CD4-positive, alpha-beta T cell (primary cell): ENCODE measurements at regions of chr17 and their contacts with region 1.

Region 1: DNA sequence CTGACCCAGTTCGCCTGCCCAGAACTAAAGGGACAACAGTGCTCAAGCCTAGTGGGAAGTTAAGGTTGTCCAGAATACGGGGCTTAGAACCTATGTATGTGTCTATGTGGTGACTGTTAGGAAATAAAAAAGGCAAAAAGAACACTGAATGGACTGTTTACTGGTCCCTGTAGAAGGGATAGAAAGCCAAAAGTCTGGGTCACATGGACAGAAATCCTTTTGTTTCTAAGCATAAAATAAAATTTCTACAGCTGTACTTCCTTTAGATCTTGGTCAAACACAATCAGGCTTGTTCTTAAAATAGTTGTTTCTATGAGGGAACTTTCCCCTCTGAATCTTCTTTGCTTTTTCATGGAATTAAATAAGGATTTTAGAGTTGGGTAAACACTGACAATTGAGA is 212.8 kb downstream of the LGALS9B start:
- DNase-seq: no peak
- ATAC-seq: no peak
- H3K4me3 ChIP-seq: no peak overlapping the region
- H3K4me3 Mint-ChIP-seq: no peak overlapping the region
- H3K27ac ChIP-seq: peak overlapping the region in 1 of 2 donors; percentile 22
- H3K27ac Mint-ChIP-seq: peak overlapping the region; percentile 75
- H3K4me1 ChIP-seq: peaks cover 15% of the 10 kb centered on the region
- H3K4me1 Mint-ChIP-seq: peaks cover 58% of the 10 kb centered on the region
- H3K27me3 ChIP-seq: no peaks in the 10 kb centered on the region
- H3K27me3 Mint-ChIP-seq: no peaks in the 10 kb centered on the region
- CTCF ChIP-seq: no peak

Region 2: DNA sequence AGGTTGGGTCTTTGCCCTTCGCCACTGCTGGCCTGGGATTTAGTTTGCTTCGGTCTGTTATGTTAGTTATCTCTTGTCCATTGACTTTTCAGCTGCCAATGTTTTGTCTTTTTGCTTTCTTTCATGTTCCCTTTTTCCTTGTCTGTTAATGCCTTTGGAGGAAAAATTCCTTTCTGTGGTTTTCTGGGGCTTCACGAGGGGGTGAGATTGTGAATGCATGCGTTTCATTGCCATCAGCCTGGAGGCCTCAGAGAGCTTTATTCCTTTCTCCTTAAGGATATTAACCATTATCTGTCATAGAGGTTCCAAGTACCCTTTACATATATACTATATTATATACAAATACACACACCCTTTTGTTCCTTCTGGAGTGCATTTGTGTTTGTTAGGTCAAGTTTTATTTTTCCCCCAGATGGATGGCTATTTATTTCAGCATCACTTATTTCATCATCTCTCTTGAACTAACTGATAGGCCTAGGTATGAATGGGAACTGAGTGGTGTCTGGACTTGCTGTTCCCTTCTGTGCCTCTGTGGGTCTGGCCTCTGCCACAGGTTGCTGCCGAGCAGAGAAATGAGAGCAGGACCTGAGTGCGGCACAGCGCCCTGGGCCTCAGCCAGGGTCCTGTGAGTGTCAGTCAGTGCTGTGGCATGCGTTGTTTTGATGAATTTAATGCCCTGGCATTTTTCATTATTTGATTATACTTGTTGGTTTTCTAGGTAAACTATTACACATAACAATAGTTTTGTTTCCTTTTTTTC is 19.4 kb after region 1 on chr17:
- CTCF ChIA-PET with region 1: no interaction called
- POLR2A ChIA-PET with region 1: interaction called, 4 read pairs
- intact Hi-C with region 1: loop called in 1 of 2 experiments (anchors 2 kb)
- DNase-seq: no peak
- ATAC-seq: peak; percentile 19
- H3K4me3 ChIP-seq: no peak overlapping the region
- H3K4me3 Mint-ChIP-seq: peak overlapping the region; percentile 77
- H3K27ac ChIP-seq: peak overlapping the region in 1 of 2 donors; percentile 27
- H3K27ac Mint-ChIP-seq: peak overlapping the region; percentile 80
- H3K4me1 ChIP-seq: peaks cover 70% of the 10 kb centered on the region
- H3K4me1 Mint-ChIP-seq: peaks cover 99% of the 10 kb centered on the region
- H3K27me3 ChIP-seq: no peaks in the 10 kb centered on the region
- H3K27me3 Mint-ChIP-seq: no peaks in the 10 kb centered on the region
- CTCF ChIP-seq: no peak